AG04449 (cell line): ENCODE measurements at regions of chr19 and their contacts with region 1.

Region 1: GRCh38 chr19:40542202-40542859 is 34.3 kb upstream of the SHKBP1 start:
- DNase-seq: no peak
- H3K4me3 ChIP-seq: no peak overlapping the region
- CTCF ChIP-seq: no peak

Region 2: GRCh38 chr19:40452016-40452415 is 90.3 kb before region 1 on chr19:
- CTCF ChIA-PET with region 1: no interaction called
- POLR2A ChIA-PET with region 1: no interaction called
- DNase-seq: no peak
- H3K4me3 ChIP-seq: no peak overlapping the region
- CTCF ChIP-seq: no peak

Region 3: DNA sequence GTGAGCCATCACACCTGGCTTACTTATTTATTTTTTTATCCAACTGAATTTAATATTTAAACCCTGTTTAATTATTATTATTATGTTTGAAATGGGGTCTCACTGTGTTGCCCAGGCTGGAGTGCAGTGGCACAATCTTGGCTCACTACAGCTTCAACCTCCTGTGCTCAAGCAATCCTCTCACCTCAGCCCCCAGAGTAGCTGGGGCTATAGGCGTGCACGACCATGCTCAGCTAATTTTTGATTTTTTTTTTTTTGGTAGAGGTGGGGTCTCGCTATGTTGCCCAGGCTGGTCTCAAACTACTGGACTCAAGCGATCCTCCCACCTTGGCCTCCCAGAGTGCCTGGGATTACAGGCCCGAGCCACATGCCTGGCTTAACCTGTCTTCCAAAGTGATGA is 43.0 kb before region 1 on chr19:
- CTCF ChIA-PET with region 1: no interaction called
- POLR2A ChIA-PET with region 1: no interaction called
- DNase-seq: no peak
- H3K4me3 ChIP-seq: no peak overlapping the region
- CTCF ChIP-seq: no peak

Region 4: DNA sequence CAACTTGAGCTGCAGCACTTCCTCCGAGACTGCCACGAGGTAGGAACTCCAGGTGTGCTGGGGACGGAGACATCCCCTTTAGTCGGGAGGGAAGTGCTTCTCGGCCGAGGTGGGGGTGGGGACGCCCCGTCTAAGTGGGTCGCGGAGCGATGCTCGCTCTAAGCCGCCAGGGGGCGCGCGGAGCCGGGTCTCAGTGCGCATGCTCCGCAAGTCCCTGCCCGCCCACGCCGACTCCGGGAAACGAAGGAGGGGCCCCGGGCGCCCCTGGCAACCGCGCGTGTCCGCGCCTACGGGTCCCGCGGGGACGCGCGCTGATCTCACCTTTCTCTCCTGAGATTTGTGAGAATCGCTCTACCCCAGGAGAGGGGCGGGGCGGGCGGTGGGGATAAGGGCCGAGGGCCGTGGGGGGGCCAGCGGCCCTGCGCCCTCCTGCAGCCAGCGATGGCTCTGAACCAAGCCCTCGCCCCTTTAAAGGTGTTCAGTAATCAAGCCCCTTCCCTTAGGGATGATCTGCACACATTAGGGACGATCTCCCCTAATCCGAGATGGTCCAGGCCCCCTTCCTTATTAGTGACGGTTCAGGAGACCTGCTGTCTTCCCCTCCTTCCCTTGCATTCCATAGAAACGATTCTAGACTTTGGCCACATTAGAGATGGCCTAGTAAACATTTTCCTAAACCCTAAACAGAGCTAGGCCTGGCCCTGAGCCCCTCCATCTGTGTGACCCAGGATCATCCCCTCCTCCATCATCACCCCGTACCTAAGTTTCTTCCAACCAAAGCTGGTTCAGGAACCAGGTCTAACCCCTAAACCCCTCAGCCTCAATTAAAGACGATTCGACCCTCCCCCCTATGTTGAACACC is 13.0 kb before region 1 on chr19:
- CTCF ChIA-PET with region 1: interaction called, 17 read pairs
- POLR2A ChIA-PET with region 1: no interaction called
- DNase-seq: no peak
- H3K4me3 ChIP-seq: peak overlapping the region; percentile 54
- CTCF ChIP-seq: peak; percentile 97

Region 5: GRCh38 chr19:40570313-40571004 is 28.1 kb after region 1 on chr19:
- CTCF ChIA-PET with region 1: interaction called, 15 read pairs
- POLR2A ChIA-PET with region 1: no interaction called
- DNase-seq: peak; percentile 95
- H3K4me3 ChIP-seq: peak overlapping the region; percentile 79
- CTCF ChIP-seq: no peak

Region 6: GRCh38 chr19:40603389-40604135 is 61.2 kb after region 1 on chr19:
- CTCF ChIA-PET with region 1: interaction called, 89 read pairs
- POLR2A ChIA-PET with region 1: no interaction called
- DNase-seq: no peak
- H3K4me3 ChIP-seq: peak overlapping the region; percentile 53
- CTCF ChIP-seq: no peak